Activated CD4-positive, alpha-beta T cell treated with anti-CD3 and anti-CD28 coated beads, Interleukin-2, amount 10 ng/mL, durations not matched to agents 24 days and 14 days (primary cell): ENCODE measurements at regions of chr19 and their contacts with region 1.

Region 1: GRCh38 chr19:51986309-51987291 is at the start of gene ZNF350:
- DNase-seq: peak; percentile 96
- H3K4me3 Mint-ChIP-seq: peak within 1 kb of the TSS; percentile 91
- H3K27ac Mint-ChIP-seq: peak within 1 kb of the TSS; percentile 92
- H3K4me1 Mint-ChIP-seq: peaks cover 8% of the 10 kb centered on the region
- H3K27me3 Mint-ChIP-seq: no peaks in the 10 kb centered on the region
- total RNA-seq, gene ZNF350: 7.4 and 8.4 TPM in 2 replicates

Region 2: GRCh38 chr19:51904331-51905165 is 82.1 kb before region 1 on chr19 and contains the start of gene ZNF649:
- intact Hi-C with region 1: loop called (anchors 2 kb)
- DNase-seq: peak; percentile 93
- H3K4me3 Mint-ChIP-seq: peak within 1 kb of the TSS; percentile 87
- H3K27ac Mint-ChIP-seq: peak within 1 kb of the TSS; percentile 95
- H3K4me1 Mint-ChIP-seq: peaks cover 11% of the 10 kb centered on the region
- H3K27me3 Mint-ChIP-seq: peaks cover 4% of the 10 kb centered on the region
- total RNA-seq, gene ZNF649: 10.7 and 11.0 TPM in 2 replicates

Region 3: DNA sequence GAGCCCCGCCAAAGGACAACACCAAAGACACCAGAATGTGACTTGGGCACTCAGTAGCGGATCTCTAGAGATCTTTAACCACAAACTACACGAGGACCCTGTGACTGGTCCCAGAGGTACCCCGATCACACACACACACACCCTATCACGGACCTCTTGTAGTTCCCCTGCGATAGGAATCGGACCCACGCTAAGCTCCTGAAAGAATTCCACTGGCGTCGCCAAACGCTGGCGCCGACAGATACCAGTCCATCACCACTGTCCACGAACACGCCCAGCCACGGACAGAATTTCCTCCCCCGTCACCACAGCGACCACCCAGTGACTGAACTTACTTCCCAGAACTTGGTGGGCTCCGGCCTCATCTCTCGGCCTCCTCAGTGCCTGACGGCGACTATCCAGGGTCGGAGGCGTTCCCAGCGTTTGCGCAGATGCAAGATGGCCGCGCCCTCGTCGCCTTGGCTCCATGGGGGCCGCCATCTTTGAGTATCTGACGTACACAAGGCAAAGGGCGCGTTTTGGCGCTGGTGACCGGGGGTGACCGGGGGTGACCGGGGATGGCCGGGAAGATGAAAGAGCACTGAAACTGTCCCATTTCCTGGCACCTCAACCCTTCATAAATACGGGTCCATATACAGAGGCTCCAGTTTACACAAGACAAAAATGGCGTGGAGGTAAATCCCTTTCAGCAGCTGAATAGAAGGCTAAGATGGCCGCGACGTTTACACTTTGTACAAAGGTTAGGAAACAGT is 21.4 kb after region 1 on chr19 and contains the start of gene ZNF615:
- intact Hi-C with region 1: loop called (anchors 1 kb)
- DNase-seq: peak; percentile 96
- H3K4me3 Mint-ChIP-seq: peak within 1 kb of the TSS; percentile 91
- H3K27ac Mint-ChIP-seq: peak within 1 kb of the TSS; percentile 98
- H3K4me1 Mint-ChIP-seq: peaks cover 14% of the 10 kb centered on the region
- H3K27me3 Mint-ChIP-seq: no peaks in the 10 kb centered on the region
- total RNA-seq, gene ZNF615: 5.9 and 6.9 TPM in 2 replicates

Region 4: GRCh38 chr19:52028027-52028779 is 41.6 kb after region 1 on chr19 and contains the start of gene ZNF614:
- intact Hi-C with region 1: loop called (anchors 1 kb)
- DNase-seq: peak; percentile 96
- H3K4me3 Mint-ChIP-seq: peak within 1 kb of the TSS; percentile 94
- H3K27ac Mint-ChIP-seq: peak within 1 kb of the TSS; percentile 95
- H3K4me1 Mint-ChIP-seq: peaks cover 15% of the 10 kb centered on the region
- H3K27me3 Mint-ChIP-seq: no peaks in the 10 kb centered on the region
- total RNA-seq, gene ZNF614: 11.0 and 12.7 TPM in 2 replicates